ENCODE measurements at regions of chr12 and their contacts with region 1.

Region 1: GRCh38 chr12:114403011-114403689 is 2.8 kb downstream of the TBX5 start:
- DNase-seq: no peak
- H3K4me3 Mint-ChIP-seq: no peak overlapping the region
- H3K27ac Mint-ChIP-seq: no peak overlapping the region
- H3K4me1 Mint-ChIP-seq: no peaks in the 10 kb centered on the region
- H3K27me3 Mint-ChIP-seq: peaks cover 92% of the 10 kb centered on the region

Region 2: GRCh38 chr12:113467502-113468364 is 935.4 kb before region 1 on chr12:
- intact Hi-C with region 1: loop called (anchors 2 kb)
- DNase-seq: no peak
- H3K4me3 Mint-ChIP-seq: no peak overlapping the region
- H3K27ac Mint-ChIP-seq: no peak overlapping the region
- H3K4me1 Mint-ChIP-seq: peaks cover 6% of the 10 kb centered on the region
- H3K27me3 Mint-ChIP-seq: peaks cover 69% of the 10 kb centered on the region

Region 3: DNA sequence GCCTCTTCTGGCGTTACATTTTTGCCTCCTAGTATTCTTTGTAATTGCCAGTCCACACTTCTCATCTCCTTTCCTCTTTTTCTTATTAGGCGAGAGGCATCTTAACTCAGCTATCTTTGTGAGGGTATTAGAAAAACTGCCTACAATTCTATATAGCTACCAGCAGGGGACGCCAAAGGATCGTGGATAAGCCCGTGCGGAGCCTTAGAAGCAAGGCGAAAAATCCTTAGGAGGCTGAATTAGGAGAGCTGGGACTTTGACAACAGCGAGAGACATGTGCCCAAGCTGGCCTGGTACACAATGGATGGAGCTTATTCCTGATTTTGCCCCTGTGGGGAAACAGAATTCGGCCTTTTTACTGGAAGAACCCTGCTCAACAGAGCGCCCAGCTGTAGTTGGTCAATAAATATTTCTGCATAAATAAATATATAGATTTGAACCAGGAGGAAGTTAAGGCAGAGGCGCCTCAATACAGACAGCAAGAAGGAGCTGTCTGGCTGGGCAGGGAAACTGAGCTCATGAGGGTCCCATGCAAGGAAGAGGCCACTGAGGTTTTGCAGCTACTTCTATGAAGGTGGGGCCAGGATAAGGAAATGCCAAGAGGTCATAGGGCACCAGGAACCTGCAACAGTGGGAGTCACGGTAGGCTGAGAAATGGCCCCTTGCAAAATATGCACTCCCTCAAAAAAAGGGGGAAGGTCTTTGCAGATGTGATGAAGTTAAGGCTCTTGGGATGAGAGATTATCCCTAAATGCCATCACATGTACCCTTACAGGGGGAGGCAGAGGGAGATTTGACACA is 422.4 kb before region 1 on chr12:
- intact Hi-C with region 1: loop called (anchors 5 kb)
- DNase-seq: peak; percentile 13
- H3K4me3 Mint-ChIP-seq: no peak overlapping the region
- H3K27ac Mint-ChIP-seq: no peak overlapping the region
- H3K4me1 Mint-ChIP-seq: no peaks in the 10 kb centered on the region
- H3K27me3 Mint-ChIP-seq: no peaks in the 10 kb centered on the region

Region 4: GRCh38 chr12:114480337-114481199 is 77.4 kb after region 1 on chr12:
- intact Hi-C with region 1: loop called (anchors 10 kb)
- DNase-seq: no peak
- H3K4me3 Mint-ChIP-seq: no peak overlapping the region
- H3K27ac Mint-ChIP-seq: no peak overlapping the region
- H3K4me1 Mint-ChIP-seq: no peaks in the 10 kb centered on the region
- H3K27me3 Mint-ChIP-seq: peaks cover 44% of the 10 kb centered on the region

Region 5: DNA sequence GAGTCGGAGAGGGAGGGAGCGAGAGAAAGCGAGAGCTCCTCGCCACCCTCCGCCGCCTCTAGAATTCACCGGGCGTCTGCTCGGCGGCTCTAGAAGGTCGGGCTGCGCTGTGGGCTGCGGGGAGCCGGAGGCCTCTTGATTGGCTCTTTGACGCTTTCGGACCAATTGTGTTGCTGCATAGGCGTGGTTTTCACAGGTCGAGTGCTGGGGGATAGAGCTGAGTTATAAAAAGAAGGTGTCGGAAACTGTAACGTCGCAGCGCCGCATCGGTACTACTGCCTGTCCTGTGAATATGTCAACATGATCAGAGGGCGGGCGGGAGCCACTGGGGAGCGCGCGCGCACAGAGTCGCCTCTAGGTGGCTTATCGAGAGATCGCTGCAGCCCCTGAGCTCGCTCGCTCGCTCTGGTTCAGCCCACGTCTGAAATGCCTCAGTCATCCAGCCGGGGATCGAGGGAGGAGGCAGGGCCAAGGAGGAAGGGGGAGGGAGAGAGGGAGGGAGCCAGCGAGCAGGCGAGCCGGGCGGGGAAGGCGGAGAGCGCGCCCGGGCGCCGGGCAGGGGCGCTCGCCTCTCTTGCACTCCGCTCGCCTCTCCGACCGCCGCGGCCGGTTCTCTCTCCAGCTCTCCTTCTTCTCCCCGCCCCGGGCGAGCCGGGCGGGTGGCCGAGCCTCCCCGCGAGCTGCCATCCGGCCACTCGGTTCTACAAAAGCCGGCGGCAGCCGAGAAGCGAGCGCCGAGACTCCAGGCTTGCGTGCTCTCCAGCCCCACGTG is 281.1 kb after region 1 on chr12 and contains the start of gene TBX3:
- intact Hi-C with region 1: loop called (anchors 5 kb)
- DNase-seq: peak; percentile 21
- H3K4me3 Mint-ChIP-seq: peak within 1 kb of the TSS; percentile 48
- H3K27ac Mint-ChIP-seq: no peak within 1 kb of the TSS
- H3K4me1 Mint-ChIP-seq: peaks cover 9% of the 10 kb centered on the region
- H3K27me3 Mint-ChIP-seq: peaks cover 90% of the 10 kb centered on the region
- total RNA-seq, gene TBX3: not detected in 2 replicates